Posterior cingulate gyrus (tissue), 11 donors: ENCODE measurements at regions of chr3 and their contacts with region 1.

Region 1: DNA sequence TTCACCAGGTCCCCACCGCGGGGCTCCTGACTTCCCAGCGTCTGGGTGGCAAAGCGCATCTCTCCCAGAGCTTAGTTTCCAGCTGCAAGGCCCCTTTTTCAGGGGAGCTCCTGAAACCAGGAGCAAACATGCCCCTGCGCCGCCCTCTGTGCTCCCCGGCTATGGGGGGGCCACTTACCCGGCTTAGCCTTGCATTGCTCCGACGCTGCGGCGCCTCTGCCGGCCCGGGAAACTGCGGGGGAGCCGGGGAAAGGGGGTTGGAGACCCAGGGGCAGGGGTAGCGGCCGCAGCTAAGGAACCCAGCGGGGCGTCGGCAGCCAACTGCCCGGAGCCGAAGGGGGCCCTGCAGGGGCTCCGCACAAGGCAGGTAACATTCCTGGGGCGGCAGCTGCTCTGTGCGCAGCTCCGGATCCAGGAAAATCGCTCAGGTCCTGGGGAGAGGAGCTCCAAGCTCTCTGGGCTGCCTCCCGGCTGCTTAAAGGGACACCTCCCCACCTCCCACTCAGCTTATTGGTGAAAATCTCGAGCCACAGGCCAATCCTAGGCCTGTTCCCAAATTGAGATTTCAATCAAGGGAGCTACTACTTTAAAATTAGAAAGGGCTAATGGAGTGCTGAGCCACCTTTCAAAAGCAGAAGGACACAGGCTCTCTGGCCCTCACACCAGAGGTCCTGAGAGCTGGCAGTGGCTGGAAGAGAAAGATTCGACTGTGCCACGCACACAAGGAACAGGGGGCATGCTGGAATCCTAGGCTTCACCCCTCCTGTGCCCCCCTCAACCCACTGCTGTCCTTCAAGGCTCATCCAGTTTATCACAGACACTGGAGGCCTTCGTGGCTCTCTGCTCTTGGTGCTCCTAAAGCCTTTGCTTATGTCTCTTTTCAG is 42.7 kb upstream of the PRICKLE2 start:
- DNase-seq: peak; percentile 27 to 96 (median 74)

Region 2: GRCh38 chr3:64213962-64214379 is 54.0 kb before region 1 on chr3:
- intact Hi-C with region 1: loop called (anchors 5 kb)
- DNase-seq: no peak

Region 3: DNA sequence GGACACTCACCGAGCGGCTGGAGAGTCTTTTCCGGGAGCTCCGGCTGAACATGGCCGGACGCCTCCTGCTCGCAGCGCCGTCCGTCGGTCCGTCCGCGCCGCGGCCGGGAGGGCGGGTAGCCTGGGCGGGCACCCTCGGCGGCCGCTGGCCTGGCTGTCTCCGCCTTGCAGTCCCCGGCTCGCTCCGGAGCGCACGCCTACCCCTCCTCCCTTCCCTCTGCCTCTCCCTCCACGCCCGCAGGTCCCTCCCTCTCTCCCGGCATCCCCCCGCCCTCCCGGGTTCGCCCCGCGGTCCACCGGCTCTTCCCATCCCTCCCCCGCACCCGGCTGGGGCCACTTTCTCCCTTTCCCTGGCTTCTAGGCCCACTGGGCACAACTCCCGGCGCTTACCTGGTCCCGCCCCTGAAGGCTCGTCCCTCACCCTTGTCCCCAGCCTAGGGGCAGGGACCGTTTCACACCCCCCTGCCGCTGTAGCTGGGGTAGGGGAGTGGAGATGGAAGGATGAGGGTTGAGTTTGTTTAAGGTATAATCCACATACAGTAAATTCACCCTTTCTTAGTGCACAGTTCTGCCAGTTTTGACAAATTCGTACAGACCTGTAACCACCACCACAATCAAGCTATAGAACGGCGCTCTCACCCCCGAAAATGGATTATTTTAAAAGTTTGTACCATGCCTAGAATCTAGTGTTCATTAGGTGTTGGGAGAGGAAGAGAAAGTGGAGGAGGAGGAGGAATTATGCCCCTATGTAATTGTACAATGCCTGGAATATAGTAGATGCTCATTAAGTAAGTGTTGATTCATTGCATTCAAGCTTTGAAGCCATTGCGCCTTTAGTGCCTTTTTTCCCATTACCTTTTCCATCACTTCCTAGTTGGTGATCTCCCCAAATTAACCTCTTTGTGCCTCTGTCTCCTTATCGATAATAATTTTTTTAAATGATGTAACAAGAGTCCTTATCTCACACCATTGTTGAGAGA is 177.6 kb after region 1 on chr3:
- intact Hi-C with region 1: no loop called
- DNase-seq: peak in 3 of 10 donors; percentile 70 to 77 (median 76)